ENCODE measurements at regions of chr7 and their contacts with region 1.

Region 1: GRCh38 chr7:128010394-128011127 is 20.7 kb downstream of the LRRC4 start:
- DNase-seq: no peak
- H3K4me3 Mint-ChIP-seq: no peak overlapping the region
- H3K27ac Mint-ChIP-seq: peak overlapping the region; percentile 9
- H3K4me1 Mint-ChIP-seq: no peaks in the 10 kb centered on the region
- H3K27me3 Mint-ChIP-seq: no peaks in the 10 kb centered on the region

Region 2: GRCh38 chr7:127927348-127927696 is 83.2 kb before region 1 on chr7:
- intact Hi-C with region 1: loop called (anchors 5 kb)
- DNase-seq: no peak
- H3K4me3 Mint-ChIP-seq: no peak overlapping the region
- H3K27ac Mint-ChIP-seq: no peak overlapping the region
- H3K4me1 Mint-ChIP-seq: peaks cover 14% of the 10 kb centered on the region
- H3K27me3 Mint-ChIP-seq: no peaks in the 10 kb centered on the region

Measured in activated T-helper 1 cell treated with anti-CD3 and anti-CD28 coated beads, Interleukin-12 subunit alpha, Interleukin-12 subunit beta, Interleukin-2, Interleukin-4 antibody, amounts not matched to agents 30 ng/mL and 10 ng/mL and 1 ng/mL, durations not matched to agents 14 hours and 24 hours and 36 hours (primary cell).